ENCODE measurements at regions of chr18 and their contacts with region 1.

Region 1: DNA sequence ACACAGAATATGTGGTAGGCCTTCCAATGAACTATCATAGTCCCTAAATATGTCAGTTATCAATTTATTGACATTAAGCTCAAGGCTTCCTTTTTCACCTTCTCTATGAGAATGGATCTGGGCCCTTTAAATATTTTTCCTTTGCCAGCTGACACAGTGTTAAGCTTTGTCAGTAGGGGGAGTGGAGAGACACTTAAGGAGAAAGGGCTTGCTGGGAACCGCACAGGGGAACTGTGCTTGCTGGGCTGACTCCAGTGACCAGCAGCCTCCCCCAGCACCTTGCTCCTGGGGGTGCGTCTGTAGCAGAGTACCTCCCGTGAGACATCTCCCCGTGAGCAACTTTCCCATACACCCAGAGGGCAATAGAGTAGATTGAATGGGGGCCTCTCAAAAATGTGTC is 6.5 kb upstream of the PTPN2 start:
- DNase-seq: no peak
- H3K4me3 Mint-ChIP-seq: no peak overlapping the region
- H3K27ac Mint-ChIP-seq: no peak overlapping the region
- H3K4me1 Mint-ChIP-seq: peaks cover 15% of the 10 kb centered on the region
- H3K27me3 Mint-ChIP-seq: peaks cover 5% of the 10 kb centered on the region

Region 2: DNA sequence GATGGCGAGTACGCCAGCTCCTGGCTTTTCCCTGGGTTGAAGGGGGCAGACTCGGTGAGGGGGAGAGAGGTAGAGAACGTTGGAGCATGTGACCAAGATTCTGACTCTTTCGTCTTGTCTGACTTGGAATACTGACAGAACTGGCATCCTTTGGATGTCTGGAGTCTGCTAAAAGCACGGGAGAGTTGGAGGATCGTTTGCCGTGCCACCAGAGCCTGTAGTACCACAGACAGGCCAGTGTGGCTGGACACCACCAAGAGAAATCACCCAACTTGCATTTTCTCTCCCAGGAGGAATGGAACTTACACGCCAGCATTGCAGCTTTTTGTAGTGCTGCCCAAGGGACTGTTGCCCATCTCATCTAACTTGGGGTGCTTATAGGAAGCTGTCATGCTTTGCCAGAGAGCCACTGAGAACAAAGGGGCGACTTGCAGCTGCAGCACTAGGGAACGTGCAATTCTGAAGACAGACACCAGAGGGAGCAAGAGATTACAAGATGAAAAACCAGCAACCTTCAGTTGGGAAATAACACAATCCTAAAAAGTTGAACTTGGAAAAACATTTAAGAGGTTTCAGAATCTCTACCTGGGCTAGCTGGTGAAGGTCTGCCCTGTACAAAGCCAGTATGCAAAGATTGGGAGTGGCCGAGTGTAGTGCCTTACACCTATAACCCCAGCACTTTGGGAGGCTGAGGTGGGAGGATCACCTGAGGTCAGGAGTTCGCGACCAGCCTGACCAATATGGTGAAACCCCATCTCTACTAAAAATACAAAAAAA is 163.5 kb before region 1 on chr18:
- CTCF ChIA-PET with region 1: interaction called, 15 read pairs
- POLR2A ChIA-PET with region 1: interaction called, 3 read pairs
- intact Hi-C with region 1: loop called (anchors 1 kb)
- DNase-seq: peak; percentile 43
- H3K4me3 Mint-ChIP-seq: no peak overlapping the region
- H3K27ac Mint-ChIP-seq: no peak overlapping the region
- H3K4me1 Mint-ChIP-seq: peaks cover 1% of the 10 kb centered on the region
- H3K27me3 Mint-ChIP-seq: no peaks in the 10 kb centered on the region

Region 3: GRCh38 chr18:12744103-12744502 is 146.4 kb before region 1 on chr18:
- CTCF ChIA-PET with region 1: interaction called, 27 read pairs
- POLR2A ChIA-PET with region 1: no interaction called
- intact Hi-C with region 1: loop called (anchors 1 kb)
- DNase-seq: no peak
- H3K4me3 Mint-ChIP-seq: no peak overlapping the region
- H3K27ac Mint-ChIP-seq: no peak overlapping the region
- H3K4me1 Mint-ChIP-seq: peaks cover 4% of the 10 kb centered on the region
- H3K27me3 Mint-ChIP-seq: no peaks in the 10 kb centered on the region

Region 4: GRCh38 chr18:13019301-13019700 is 128.8 kb after region 1 on chr18:
- CTCF ChIA-PET with region 1: no interaction called
- POLR2A ChIA-PET with region 1: no interaction called
- intact Hi-C with region 1: no loop called
- DNase-seq: no peak
- H3K4me3 Mint-ChIP-seq: no peak overlapping the region
- H3K27ac Mint-ChIP-seq: no peak overlapping the region
- H3K4me1 Mint-ChIP-seq: peaks cover 29% of the 10 kb centered on the region
- H3K27me3 Mint-ChIP-seq: no peaks in the 10 kb centered on the region

Region 5: DNA sequence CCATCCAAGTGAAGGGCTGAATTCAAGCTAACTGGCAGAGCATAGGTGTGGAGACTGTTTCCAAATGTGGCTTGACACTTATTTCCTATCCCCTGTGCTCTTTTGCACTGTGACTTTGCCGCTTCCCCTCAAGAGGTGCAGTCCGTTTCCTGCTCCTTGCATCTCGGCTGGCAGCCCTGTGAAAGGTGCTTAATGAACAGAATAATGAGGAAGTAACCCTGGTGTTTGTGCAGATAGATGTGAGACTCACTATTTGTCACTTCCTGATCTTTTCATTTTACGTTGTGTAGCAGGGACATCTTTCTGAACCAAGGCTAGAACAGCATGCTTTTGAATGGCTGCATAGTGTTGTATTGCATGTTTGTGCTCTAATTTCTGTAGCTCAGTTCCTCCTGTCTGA is 161.4 kb after region 1 on chr18:
- CTCF ChIA-PET with region 1: no interaction called
- POLR2A ChIA-PET with region 1: no interaction called
- intact Hi-C with region 1: no loop called
- DNase-seq: peak; percentile 28
- H3K4me3 Mint-ChIP-seq: no peak overlapping the region
- H3K27ac Mint-ChIP-seq: peak overlapping the region; percentile 40
- H3K4me1 Mint-ChIP-seq: peaks cover 18% of the 10 kb centered on the region
- H3K27me3 Mint-ChIP-seq: no peaks in the 10 kb centered on the region

Region 6: GRCh38 chr18:13558124-13558523 is 667.6 kb after region 1 on chr18:
- CTCF ChIA-PET with region 1: no interaction called
- POLR2A ChIA-PET with region 1: no interaction called
- intact Hi-C with region 1: no loop called
- DNase-seq: peak; percentile 43
- H3K4me3 Mint-ChIP-seq: no peak overlapping the region
- H3K27ac Mint-ChIP-seq: no peak overlapping the region
- H3K4me1 Mint-ChIP-seq: peaks cover 38% of the 10 kb centered on the region
- H3K27me3 Mint-ChIP-seq: no peaks in the 10 kb centered on the region

Region 7: GRCh38 chr18:13696961-13697360 is 806.5 kb after region 1 on chr18:
- CTCF ChIA-PET with region 1: no interaction called
- POLR2A ChIA-PET with region 1: no interaction called
- intact Hi-C with region 1: loop called (anchors 10 kb)
- DNase-seq: no peak
- H3K4me3 Mint-ChIP-seq: no peak overlapping the region
- H3K27ac Mint-ChIP-seq: no peak overlapping the region
- H3K4me1 Mint-ChIP-seq: peaks cover 13% of the 10 kb centered on the region
- H3K27me3 Mint-ChIP-seq: no peaks in the 10 kb centered on the region

Measured in activated CD4-positive, alpha-beta memory T cell treated with anti-CD3 and anti-CD28 coated beads for 36 hours (primary cell).